ENCODE measurements at regions of chr17 and their contacts with region 1.

Region 1: GRCh38 chr17:34254651-34255380 is at the start of gene CCL2:
- DNase-seq: peak; percentile 85
- ATAC-seq: peak; percentile 69
- H3K4me3 ChIP-seq: peak within 1 kb of the TSS; percentile 47
- H3K27ac ChIP-seq: peak within 1 kb of the TSS; percentile 89
- H3K4me1 ChIP-seq: peaks cover 38% of the 10 kb centered on the region
- H3K27me3 ChIP-seq: no peaks in the 10 kb centered on the region
- CTCF ChIP-seq: no peak
- POLR2A ChIP-seq: peak; percentile 37; the same call in 1 of the 2 replicates
- RAD21 ChIP-seq: no peak
- total RNA-seq, gene CCL2: 126 and 206 TPM in 2 replicates

Region 2: GRCh38 chr17:33779225-33779591 is 475.6 kb before region 1 on chr17:
- CTCF ChIA-PET with region 1: no interaction called
- POLR2A ChIA-PET with region 1: no interaction called
- dilution Hi-C with region 1: no loop called
- in situ Hi-C with region 1: no loop called
- intact Hi-C with region 1: no loop called
- DNase-seq: peak; percentile 69
- ATAC-seq: peak; percentile 97
- H3K4me3 ChIP-seq: no peak overlapping the region
- H3K27ac ChIP-seq: no peak overlapping the region
- H3K4me1 ChIP-seq: no peaks in the 10 kb centered on the region
- H3K27me3 ChIP-seq: peaks cover 2% of the 10 kb centered on the region; the same call in 1 of the 2 replicates
- CTCF ChIP-seq: peak; percentile 89
- POLR2A ChIP-seq: no peak
- RAD21 ChIP-seq: peak; percentile 54

Region 3: DNA sequence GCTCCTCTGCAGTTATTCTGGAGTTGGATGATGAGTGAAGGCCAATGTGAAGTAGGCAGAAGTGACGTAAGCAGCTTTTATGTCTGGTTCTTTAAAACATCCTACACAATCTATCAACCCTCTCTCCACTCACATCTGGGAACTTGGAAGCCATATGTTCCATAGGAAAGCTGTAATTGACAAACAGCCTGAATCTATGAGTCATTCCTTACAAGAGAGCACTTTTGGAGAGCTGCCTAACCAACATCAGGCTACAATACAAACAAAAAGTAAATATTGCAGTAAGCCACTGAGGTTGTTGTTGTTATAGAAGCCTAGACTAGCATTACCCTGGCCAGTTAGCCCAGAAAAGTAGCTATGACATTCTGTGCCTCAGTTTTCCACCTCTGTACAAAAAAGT is 21.1 kb after region 1 on chr17:
- CTCF ChIA-PET with region 1: interaction called, 5 read pairs
- POLR2A ChIA-PET with region 1: no interaction called
- dilution Hi-C with region 1: no loop called
- in situ Hi-C with region 1: no loop called
- intact Hi-C with region 1: loop called (anchors 1 kb)
- DNase-seq: peak; percentile 97
- ATAC-seq: peak; percentile 95
- H3K4me3 ChIP-seq: no peak overlapping the region
- H3K27ac ChIP-seq: no peak overlapping the region
- H3K4me1 ChIP-seq: peaks cover 2% of the 10 kb centered on the region
- H3K27me3 ChIP-seq: peaks cover 14% of the 10 kb centered on the region
- CTCF ChIP-seq: no peak
- POLR2A ChIP-seq: no peak
- RAD21 ChIP-seq: no peak

Region 4: GRCh38 chr17:34300652-34301370 is 46.0 kb after region 1 on chr17:
- CTCF ChIA-PET with region 1: interaction called, 3 read pairs
- POLR2A ChIA-PET with region 1: interaction called, 3 read pairs
- dilution Hi-C with region 1: no loop called
- in situ Hi-C with region 1: no loop called
- intact Hi-C with region 1: loop called (anchors 1 kb)
- DNase-seq: peak; percentile 81
- ATAC-seq: peak; percentile 67
- H3K4me3 ChIP-seq: no peak overlapping the region
- H3K27ac ChIP-seq: peak overlapping the region; percentile 34; the same call in 1 of the 2 replicates
- H3K4me1 ChIP-seq: peaks cover 21% of the 10 kb centered on the region
- H3K27me3 ChIP-seq: no peaks in the 10 kb centered on the region
- CTCF ChIP-seq: no peak
- POLR2A ChIP-seq: no peak
- RAD21 ChIP-seq: no peak

Region 5: GRCh38 chr17:34354637-34355036 is 99.8 kb after region 1 on chr17:
- CTCF ChIA-PET with region 1: no interaction called
- POLR2A ChIA-PET with region 1: interaction called, 6 read pairs
- dilution Hi-C with region 1: no loop called
- in situ Hi-C with region 1: no loop called
- intact Hi-C with region 1: loop called (anchors 2 kb)
- DNase-seq: peak; percentile 70
- ATAC-seq: peak; percentile 53
- H3K4me3 ChIP-seq: no peak overlapping the region
- H3K27ac ChIP-seq: peak overlapping the region; percentile 90; the same call in 1 of the 2 replicates
- H3K4me1 ChIP-seq: peaks cover 6% of the 10 kb centered on the region
- H3K27me3 ChIP-seq: no peaks in the 10 kb centered on the region
- CTCF ChIP-seq: no peak
- POLR2A ChIP-seq: no peak
- RAD21 ChIP-seq: no peak